Activated CD4-positive, alpha-beta memory T cell treated with anti-CD3 and anti-CD28 coated beads for 36 hours (primary cell): ENCODE measurements at regions of chr5 and their contacts with region 1.

Region 1: DNA sequence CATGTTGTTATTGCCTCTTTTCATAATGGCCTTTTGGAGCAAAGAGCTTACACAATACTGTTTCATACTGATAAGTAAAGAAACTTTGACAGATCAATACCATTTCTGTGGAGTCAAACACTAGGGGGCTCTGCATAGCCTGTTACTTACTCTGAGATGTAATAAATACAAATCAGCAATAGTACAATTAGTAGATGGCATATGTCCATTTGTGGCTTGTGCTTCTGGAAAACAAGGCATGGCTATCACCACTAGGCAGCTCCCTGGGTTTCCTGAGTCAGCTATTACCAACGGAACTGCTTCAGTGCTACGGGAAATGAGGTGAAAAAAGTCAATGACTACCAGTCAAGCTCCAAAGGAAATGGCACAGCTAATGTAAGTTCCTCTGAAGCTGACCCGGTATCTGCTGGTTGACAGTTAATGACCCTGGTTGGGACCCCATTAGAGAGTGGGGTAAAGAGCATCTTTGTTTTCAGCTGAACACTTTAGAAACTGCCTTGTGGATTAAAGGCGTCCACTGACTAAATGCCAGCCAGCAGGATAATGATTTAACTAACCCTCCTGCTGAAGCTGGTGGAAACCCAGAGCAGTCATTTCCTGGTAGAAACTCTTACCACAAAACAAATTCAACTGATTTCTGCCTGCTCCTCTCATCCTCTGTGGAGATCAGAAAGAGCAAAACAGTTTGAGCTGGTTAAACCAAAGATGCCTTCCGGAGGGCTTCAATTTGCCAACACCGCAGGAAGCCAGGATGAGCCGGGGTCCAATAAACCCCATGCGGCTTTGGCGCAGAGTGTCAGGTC is 69.0 kb upstream of the FAM169A start:
- DNase-seq: peak; percentile 44
- H3K4me3 Mint-ChIP-seq: peak overlapping the region; percentile 42
- H3K27ac Mint-ChIP-seq: peak overlapping the region; percentile 71
- H3K4me1 Mint-ChIP-seq: peaks cover 26% of the 10 kb centered on the region
- H3K27me3 Mint-ChIP-seq: peaks cover 7% of the 10 kb centered on the region

Region 2: DNA sequence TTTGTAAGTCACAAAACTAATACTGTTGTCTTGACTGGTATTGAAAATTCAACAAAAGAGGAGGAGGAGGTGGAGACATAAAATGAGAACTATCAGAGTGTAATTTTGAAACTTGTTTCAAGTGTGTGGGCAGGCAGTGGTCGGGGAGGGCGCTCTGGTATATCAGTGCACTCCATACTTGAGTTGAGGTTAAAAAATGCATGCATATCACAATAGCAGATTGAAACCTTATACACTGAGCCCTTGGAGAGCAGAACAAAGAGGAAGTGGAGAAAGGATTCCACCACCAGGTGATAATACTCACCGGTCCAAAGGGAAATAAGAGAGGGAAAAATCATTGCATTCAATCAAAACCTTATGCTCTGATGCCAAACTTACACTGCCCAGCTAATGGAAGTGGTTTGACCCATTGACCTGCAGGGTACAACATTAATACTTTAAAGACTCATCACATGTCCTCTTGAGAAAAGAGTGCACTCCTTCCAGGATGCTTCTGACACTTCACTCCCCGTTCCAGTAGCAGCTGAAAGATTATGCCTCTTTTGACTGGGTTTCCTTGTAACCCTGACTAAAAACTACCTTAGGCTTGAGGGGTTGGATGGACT is 10.5 kb after region 1 on chr5:
- CTCF ChIA-PET with region 1: interaction called, 12 read pairs
- POLR2A ChIA-PET with region 1: no interaction called
- intact Hi-C with region 1: loop called (anchors 1 kb)
- DNase-seq: peak; percentile 74
- H3K4me3 Mint-ChIP-seq: no peak overlapping the region
- H3K27ac Mint-ChIP-seq: no peak overlapping the region
- H3K4me1 Mint-ChIP-seq: peaks cover 10% of the 10 kb centered on the region
- H3K27me3 Mint-ChIP-seq: peaks cover 19% of the 10 kb centered on the region

Region 3: GRCh38 chr5:74974451-74975091 is 39.4 kb after region 1 on chr5:
- CTCF ChIA-PET with region 1: interaction called, 3 read pairs
- POLR2A ChIA-PET with region 1: no interaction called
- intact Hi-C with region 1: loop called (anchors 1 kb)
- DNase-seq: peak; percentile 53
- H3K4me3 Mint-ChIP-seq: peak overlapping the region; percentile 7
- H3K27ac Mint-ChIP-seq: peak overlapping the region; percentile 82
- H3K4me1 Mint-ChIP-seq: peaks cover 27% of the 10 kb centered on the region
- H3K27me3 Mint-ChIP-seq: peaks cover 1% of the 10 kb centered on the region